ENCODE measurements at regions of chr2 and their contacts with region 1.

Region 1: DNA sequence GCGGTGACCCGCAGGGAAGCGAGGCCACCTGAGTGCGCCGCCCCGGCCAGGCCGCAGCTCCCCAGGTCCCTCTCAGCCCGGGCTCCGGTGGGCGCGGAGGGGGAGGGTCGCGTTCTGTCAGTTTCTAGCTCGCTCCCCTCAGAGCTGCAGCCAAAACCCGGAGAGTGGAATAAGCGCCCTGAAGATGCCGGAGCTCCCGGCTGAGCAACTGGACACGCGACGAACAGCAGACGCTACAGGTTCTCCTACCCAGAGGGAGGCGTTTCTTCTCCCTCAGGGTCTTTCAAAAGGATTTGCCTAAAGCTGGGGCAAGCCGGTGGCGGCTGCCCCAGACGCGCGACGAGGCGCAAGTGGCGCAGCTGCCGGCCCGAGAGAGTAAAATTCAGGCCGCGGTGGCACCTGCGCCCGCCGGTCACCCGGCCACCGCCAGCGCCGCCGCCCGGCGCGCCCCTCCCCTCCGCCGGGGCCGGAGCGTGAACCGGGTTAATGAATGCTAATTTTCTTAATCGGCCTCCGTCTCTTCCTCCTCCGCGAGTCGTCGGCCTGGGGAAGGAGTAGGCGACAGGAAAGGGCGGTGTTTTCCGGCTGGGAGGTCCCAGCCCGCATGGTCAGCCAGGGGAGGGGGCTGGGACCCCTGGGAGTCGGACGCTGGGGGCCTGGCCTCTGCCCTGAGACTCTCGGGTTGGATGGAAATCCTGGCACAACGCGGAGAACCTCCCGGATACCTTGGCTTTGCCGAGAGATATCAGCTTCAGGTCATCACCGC is 845 bp upstream of the CDC42EP3 start:
- DNase-seq: peak; percentile 83 to 87 (median 84)
- ATAC-seq: peak; percentile 68 to 86 (median 73)
- H3K4me3 ChIP-seq: peak overlapping the region; percentile 54 to 99 (median 92)
- H3K27ac ChIP-seq: peak overlapping the region; percentile 92 to 100 (median 98)
- H3K4me1 ChIP-seq: peaks cover 0 to 64% (median 14%) of the 10 kb centered on the region in 12 donors
- H3K27me3 ChIP-seq: no peaks in the 10 kb centered on the region
- CTCF ChIP-seq: peak in 1 of 12 donors; percentile 9
- POLR2A ChIP-seq: peak in 1 of 2 donors; percentile 19

Region 2: GRCh38 chr2:37529830-37530415 is 142.4 kb before region 1 on chr2:
- intact Hi-C with region 1: loop called in 1 of 10 experiments (anchors 10 kb)
- DNase-seq: no peak
- ATAC-seq: no peak
- H3K4me3 ChIP-seq: no peak overlapping the region
- H3K27ac ChIP-seq: no peak overlapping the region
- H3K4me1 ChIP-seq: peaks cover 0 to 12% (median 2%) of the 10 kb centered on the region in 12 donors
- H3K27me3 ChIP-seq: no peaks in the 10 kb centered on the region
- CTCF ChIP-seq: no peak
- POLR2A ChIP-seq: no peak

Region 3: DNA sequence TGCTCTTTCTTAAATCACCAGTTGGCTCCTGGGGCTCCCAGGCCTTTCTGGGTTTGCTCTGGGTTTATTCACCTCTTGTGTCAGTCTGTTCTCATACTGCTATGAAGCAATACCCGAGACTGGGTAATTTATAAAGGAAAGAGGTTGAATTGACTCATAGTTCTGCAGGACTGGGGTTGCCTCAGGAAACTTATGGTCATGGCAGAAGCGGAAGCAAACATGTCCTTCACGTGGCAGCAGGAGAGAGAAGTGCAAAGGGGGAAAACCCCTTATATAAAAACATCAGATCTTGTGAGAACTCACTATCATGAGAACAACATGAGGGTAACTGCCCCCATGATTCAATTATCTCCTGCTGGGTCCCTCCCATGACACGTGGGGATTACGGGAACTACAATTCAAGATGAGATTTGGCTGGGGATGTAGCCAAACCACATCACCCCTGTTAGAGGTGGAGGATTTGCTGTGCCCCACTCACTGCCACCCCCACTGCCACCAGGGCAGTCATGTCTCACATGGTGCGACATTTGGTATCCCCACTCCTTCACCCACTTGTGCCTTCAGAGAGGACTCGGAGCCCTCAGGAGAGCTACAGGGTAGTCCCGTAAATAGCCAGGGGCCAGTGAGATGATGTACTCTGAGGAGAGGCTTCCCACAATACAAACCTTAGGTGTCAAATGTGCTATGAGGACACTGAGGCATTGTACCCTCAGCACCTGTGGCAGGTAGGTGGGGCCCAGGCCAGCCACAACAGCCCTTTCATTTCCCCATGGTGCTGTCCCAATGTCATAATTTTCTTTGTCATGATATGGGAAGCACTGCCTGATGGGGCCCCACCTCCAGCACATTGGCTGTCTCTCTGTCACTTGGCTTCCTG is 36.5 kb before region 1 on chr2:
- intact Hi-C with region 1: no loop called
- DNase-seq: peak in 2 of 5 donors; percentile 38 to 44
- ATAC-seq: peak in 3 of 4 donors; percentile 27 to 60 (median 60)
- H3K4me3 ChIP-seq: no peak overlapping the region
- H3K27ac ChIP-seq: peak overlapping the region in 1 of 12 donors; percentile 47
- H3K4me1 ChIP-seq: peaks cover 0 to 64% (median 15%) of the 10 kb centered on the region in 12 donors
- H3K27me3 ChIP-seq: no peaks in the 10 kb centered on the region
- CTCF ChIP-seq: no peak
- POLR2A ChIP-seq: no peak

Region 4: GRCh38 chr2:37653805-37654378 is 18.4 kb before region 1 on chr2:
- intact Hi-C with region 1: loop called in 3 of 10 experiments (anchors 1 to 2 kb)
- DNase-seq: peak; percentile 70 to 89 (median 79)
- ATAC-seq: peak; percentile 74 to 87 (median 79)
- H3K4me3 ChIP-seq: peak overlapping the region in 9 of 12 donors; percentile 1 to 38 (median 19)
- H3K27ac ChIP-seq: peak overlapping the region; percentile 76 to 95 (median 90)
- H3K4me1 ChIP-seq: peaks cover 28 to 98% (median 90%) of the 10 kb centered on the region in 12 donors
- H3K27me3 ChIP-seq: no peaks in the 10 kb centered on the region
- CTCF ChIP-seq: no peak
- POLR2A ChIP-seq: peak in 1 of 2 donors; percentile 34

Region 5: DNA sequence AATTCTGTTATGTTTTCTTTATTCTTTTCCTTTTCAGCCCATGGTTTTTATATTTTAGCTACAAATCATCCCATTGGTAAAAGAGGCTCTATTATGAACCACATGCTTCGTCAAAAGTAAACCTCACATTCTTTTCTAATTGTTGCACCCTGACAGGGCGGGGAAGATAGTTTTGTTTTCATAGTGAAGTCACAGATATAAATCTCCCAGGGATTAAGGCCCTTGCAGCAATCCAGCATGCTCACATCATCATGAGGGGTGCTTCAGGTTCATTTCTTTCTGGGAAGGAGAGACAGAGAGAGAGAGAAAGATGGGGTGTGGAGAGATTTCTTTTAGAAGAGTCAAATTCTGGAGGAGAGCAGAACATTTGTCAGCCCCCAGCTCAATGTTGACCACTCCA is 123.7 kb after region 1 on chr2:
- intact Hi-C with region 1: loop called in 2 of 10 experiments (anchors 10 kb)
- DNase-seq: no peak
- ATAC-seq: no peak
- H3K4me3 ChIP-seq: no peak overlapping the region
- H3K27ac ChIP-seq: peak overlapping the region in 2 of 12 donors; percentile 32 to 80
- H3K4me1 ChIP-seq: peaks cover 0 to 24% (median 2%) of the 10 kb centered on the region in 12 donors
- H3K27me3 ChIP-seq: no peaks in the 10 kb centered on the region
- CTCF ChIP-seq: no peak
- POLR2A ChIP-seq: no peak

Region 6: GRCh38 chr2:37832590-37833197 is 160.4 kb after region 1 on chr2:
- intact Hi-C with region 1: loop called in 5 of 10 experiments (anchors 2 to 5 kb)
- DNase-seq: peak; percentile 82 to 91 (median 88)
- ATAC-seq: peak; percentile 62 to 87 (median 80)
- H3K4me3 ChIP-seq: no peak overlapping the region
- H3K27ac ChIP-seq: peak overlapping the region in 5 of 12 donors; percentile 32 to 86 (median 79)
- H3K4me1 ChIP-seq: peaks cover 0 to 45% (median 31%) of the 10 kb centered on the region in 12 donors
- H3K27me3 ChIP-seq: no peaks in the 10 kb centered on the region
- CTCF ChIP-seq: peak; percentile 60 to 84 (median 77)
- POLR2A ChIP-seq: no peak